T-cell (primary cell): ENCODE measurements at regions of chr18 and their contacts with region 1.

Region 1: GRCh38 chr18:35508746-35509338 is 11.1 kb upstream of the INO80C start:
- DNase-seq: no peak
- ATAC-seq: no peak
- H3K4me3 ChIP-seq: no peak overlapping the region
- H3K4me3 Mint-ChIP-seq: no peak overlapping the region
- H3K27ac ChIP-seq: no peak overlapping the region
- H3K27ac Mint-ChIP-seq: no peak overlapping the region
- H3K4me1 ChIP-seq: no peaks in the 10 kb centered on the region
- H3K4me1 Mint-ChIP-seq: peaks cover 0 to 1% (median 0%) of the 10 kb centered on the region in 3 donors
- H3K27me3 ChIP-seq: peaks cover 0 to 3% of the 10 kb centered on the region in 2 experiments
- H3K27me3 Mint-ChIP-seq: peaks cover under 1 to 7% of the 10 kb centered on the region in 2 donors

Region 2: DNA sequence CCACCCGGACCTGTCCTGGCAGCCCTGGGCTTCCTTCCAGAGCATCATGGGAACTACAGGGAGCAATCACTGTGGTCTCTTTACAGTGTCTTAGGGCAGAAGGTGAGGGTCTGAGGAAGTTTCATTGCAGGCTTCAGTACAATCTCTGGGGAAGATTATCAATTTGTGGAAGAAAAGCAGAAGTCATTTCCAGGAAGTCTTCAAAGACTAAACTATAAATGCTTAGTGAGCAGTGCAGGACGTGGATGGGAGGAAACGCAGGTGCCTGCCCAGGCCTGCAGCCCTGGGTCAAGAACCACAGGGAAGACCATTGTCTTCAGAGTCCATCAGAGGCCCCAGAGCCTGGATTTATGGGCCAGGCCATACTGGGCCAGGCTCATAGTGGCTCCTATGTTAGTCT is 65.4 kb before region 1 on chr18:
- CTCF ChIA-PET with region 1: no interaction called
- POLR2A ChIA-PET with region 1: no interaction called
- DNase-seq: no peak
- ATAC-seq: no peak
- H3K4me3 ChIP-seq: no peak overlapping the region
- H3K4me3 Mint-ChIP-seq: no peak overlapping the region
- H3K27ac ChIP-seq: no peak overlapping the region
- H3K27ac Mint-ChIP-seq: no peak overlapping the region
- H3K4me1 ChIP-seq: no peaks in the 10 kb centered on the region
- H3K4me1 Mint-ChIP-seq: no peaks in the 10 kb centered on the region
- H3K27me3 ChIP-seq: peaks cover 0 to 9% of the 10 kb centered on the region in 2 experiments
- H3K27me3 Mint-ChIP-seq: peaks cover 7 to 12% of the 10 kb centered on the region in 2 donors

Region 3: DNA sequence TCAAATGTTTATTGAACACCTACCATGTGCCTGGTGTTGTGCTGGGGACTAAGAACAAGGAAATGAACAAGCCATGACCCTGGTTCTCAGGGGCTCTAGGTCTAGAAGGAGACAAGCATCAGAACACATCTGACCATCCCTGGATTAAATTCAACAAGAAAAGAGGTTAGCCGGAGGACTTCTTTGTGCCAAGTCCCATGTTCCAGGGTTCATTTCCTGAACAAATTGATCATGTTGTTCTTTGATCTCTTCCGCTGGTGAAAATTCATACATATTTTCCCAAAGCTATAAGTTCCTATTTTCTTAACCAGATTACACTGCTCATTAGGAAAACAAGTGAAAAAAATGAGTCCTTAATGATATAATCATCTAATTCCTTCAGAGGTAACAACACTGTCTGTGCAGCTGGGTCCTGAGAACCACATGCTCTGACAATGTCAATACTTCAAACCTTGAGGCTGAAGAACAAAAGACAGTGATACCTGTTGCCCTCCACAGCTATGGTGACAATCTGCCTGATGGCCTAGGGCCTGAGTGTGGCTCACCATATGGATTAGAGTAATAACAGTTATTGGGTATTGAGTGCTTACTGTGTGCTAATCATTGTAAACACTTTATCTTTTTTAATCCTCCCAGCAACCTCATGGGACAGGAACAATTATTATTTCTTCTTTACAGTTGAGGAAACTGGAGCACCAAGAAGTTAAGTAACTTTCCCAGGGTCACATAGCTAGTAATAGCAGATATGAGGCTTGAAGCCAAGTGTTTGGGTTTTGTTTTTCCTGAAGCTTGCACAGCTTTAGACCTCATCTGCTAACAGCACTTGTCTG is 13.5 kb after region 1 on chr18:
- CTCF ChIA-PET with region 1: no interaction called
- POLR2A ChIA-PET with region 1: interaction called in 1 of 2 experiments, 10 read pairs
- DNase-seq: no peak
- ATAC-seq: no peak
- H3K4me3 ChIP-seq: no peak overlapping the region
- H3K4me3 Mint-ChIP-seq: no peak overlapping the region
- H3K27ac ChIP-seq: no peak overlapping the region
- H3K27ac Mint-ChIP-seq: no peak overlapping the region
- H3K4me1 ChIP-seq: peaks cover 0 to 10% of the 10 kb centered on the region in 2 experiments
- H3K4me1 Mint-ChIP-seq: peaks cover 8 to 12% (median 9%) of the 10 kb centered on the region in 3 donors
- H3K27me3 ChIP-seq: peaks cover 0 to 5% of the 10 kb centered on the region in 2 experiments
- H3K27me3 Mint-ChIP-seq: peaks cover 12 to 25% of the 10 kb centered on the region in 2 donors

Region 4: DNA sequence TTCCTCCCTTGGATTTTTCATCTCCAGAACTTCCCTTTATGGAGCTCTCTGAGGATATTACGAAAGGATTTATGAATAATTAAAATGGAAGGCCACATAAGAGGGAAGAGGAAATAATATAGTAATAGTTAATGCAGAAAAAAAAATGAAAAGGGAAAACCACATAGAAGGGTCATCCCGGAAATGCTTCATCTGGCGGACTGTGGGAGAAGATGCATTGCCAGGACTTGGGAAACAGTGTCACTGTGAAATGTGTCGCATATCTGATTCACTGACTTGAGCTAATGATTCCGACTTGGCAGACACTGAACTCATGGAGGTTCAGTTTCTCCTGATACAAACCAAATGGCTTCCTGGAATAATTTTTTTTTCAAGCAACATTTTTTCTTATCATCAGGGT is 333.7 kb after region 1 on chr18:
- CTCF ChIA-PET with region 1: no interaction called
- POLR2A ChIA-PET with region 1: no interaction called
- DNase-seq: no peak
- ATAC-seq: no peak
- H3K4me3 ChIP-seq: no peak overlapping the region
- H3K4me3 Mint-ChIP-seq: no peak overlapping the region
- H3K27ac ChIP-seq: no peak overlapping the region
- H3K27ac Mint-ChIP-seq: no peak overlapping the region
- H3K4me1 ChIP-seq: no peaks in the 10 kb centered on the region
- H3K4me1 Mint-ChIP-seq: no peaks in the 10 kb centered on the region
- H3K27me3 ChIP-seq: peaks cover 0 to 8% of the 10 kb centered on the region in 2 experiments
- H3K27me3 Mint-ChIP-seq: peaks cover 3 to 21% of the 10 kb centered on the region in 2 donors